Uterus (tissue), 4 donors: ENCODE measurements at regions of chr15 and their contacts with region 1.

Region 1: GRCh38 chr15:64841258-64842095 is at the start of gene PLEKHO2:
- DNase-seq: peak; percentile 96 to 98
- H3K4me3 ChIP-seq: peak within 1 kb of the TSS; percentile 63 to 87
- H3K27ac ChIP-seq: peak within 1 kb of the TSS; percentile 92 to 94
- H3K4me1 ChIP-seq: peaks cover 6 to 13% of the 10 kb centered on the region in 2 donors
- H3K27me3 ChIP-seq: no peaks in the 10 kb centered on the region
- CTCF ChIP-seq: peak in 3 of 4 experiments; percentile 14 to 37 (median 19)
- POLR2A ChIP-seq: peak; percentile 76 to 77
- total RNA-seq, gene PLEKHO2: 10.3 to 46.2 (median 23.0) TPM

Region 2: GRCh38 chr15:64905119-64905831 is 63.8 kb after region 1 on chr15:
- intact Hi-C with region 1: loop called (anchors 10 kb)
- DNase-seq: peak; percentile 76 to 80
- H3K4me3 ChIP-seq: peak overlapping the region; percentile 23 to 34
- H3K27ac ChIP-seq: peak overlapping the region; percentile 33 to 37
- H3K4me1 ChIP-seq: no peaks in the 10 kb centered on the region
- H3K27me3 ChIP-seq: no peaks in the 10 kb centered on the region
- CTCF ChIP-seq: peak; percentile 81 to 93 (median 90)
- POLR2A ChIP-seq: peak in 1 of 2 donors; percentile 19

Region 3: DNA sequence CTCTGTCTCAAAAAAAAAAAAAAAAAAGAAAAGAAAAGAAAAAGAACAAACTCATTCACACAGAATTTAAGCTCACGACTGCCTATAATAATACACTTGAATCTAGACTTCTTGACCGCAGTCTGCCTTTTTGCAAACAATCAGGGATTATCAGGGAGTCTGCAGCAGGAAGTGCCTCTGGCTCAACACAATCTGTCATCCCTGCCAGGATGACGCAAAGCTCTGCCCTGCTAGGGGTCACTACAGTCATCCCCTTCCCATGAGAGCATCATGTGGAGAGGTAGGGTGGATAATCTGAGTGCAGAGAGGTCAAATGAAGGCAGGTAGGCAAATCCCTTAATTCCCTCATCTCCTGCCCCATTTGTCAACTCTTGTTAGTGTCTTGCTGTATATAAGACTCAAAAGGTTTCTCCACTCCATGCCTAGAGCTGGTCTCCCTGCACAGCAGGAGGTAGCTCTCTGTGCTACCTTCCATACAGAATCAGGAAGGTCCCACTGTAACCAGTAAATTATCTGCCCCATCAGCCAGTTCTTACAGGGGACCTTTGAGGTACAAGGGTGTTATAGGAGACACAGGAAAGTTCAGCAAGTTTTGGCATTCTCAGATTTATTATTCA is 269.3 kb after region 1 on chr15:
- intact Hi-C with region 1: no loop called
- DNase-seq: no peak
- H3K4me3 ChIP-seq: no peak overlapping the region
- H3K27ac ChIP-seq: no peak overlapping the region
- H3K4me1 ChIP-seq: no peaks in the 10 kb centered on the region
- H3K27me3 ChIP-seq: no peaks in the 10 kb centered on the region
- CTCF ChIP-seq: no peak
- POLR2A ChIP-seq: no peak

Region 4: GRCh38 chr15:65292938-65293518 is 451.6 kb after region 1 on chr15:
- intact Hi-C with region 1: loop called (anchors 10 kb)
- DNase-seq: no peak
- H3K4me3 ChIP-seq: no peak overlapping the region
- H3K27ac ChIP-seq: no peak overlapping the region
- H3K4me1 ChIP-seq: no peaks in the 10 kb centered on the region
- H3K27me3 ChIP-seq: no peaks in the 10 kb centered on the region
- CTCF ChIP-seq: no peak
- POLR2A ChIP-seq: no peak